ENCODE measurements at regions of chr14 and their contacts with region 1.

Region 1: DNA sequence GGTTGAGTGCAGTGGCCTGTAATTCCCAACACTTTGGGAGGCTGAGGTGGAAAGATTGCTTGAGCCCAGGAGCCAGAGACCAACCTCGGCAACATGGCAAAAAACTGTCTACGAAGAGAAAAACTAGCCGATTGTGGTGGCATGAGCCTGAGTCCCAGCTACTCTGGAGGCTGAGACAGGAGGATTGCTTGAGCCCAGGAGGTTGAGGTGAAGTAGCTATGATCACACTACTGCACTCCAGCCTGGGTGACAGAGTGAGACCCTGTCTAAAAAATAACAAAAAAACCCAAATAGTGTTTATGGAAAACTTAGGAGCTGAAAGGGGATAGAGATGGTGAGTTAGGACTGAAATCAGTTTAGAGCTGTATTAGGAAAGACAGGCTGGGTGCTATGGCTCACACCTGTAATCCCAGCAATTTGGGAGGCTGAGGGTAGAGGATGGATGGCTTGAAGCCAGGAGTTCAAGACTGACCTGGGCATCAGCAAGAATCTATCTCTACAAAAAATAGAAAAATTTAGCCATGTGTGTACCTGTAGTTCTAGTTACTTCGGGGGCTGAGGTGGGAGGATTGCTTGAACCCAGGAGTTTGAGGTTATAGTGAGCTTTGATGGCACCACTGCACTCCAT is 9.7 kb downstream of the PNN start:
- DNase-seq: no peak
- H3K4me3 ChIP-seq: no peak overlapping the region
- H3K27ac ChIP-seq: no peak overlapping the region
- H3K27me3 ChIP-seq: no peaks in the 10 kb centered on the region
- CTCF ChIP-seq: no peak

Region 2: DNA sequence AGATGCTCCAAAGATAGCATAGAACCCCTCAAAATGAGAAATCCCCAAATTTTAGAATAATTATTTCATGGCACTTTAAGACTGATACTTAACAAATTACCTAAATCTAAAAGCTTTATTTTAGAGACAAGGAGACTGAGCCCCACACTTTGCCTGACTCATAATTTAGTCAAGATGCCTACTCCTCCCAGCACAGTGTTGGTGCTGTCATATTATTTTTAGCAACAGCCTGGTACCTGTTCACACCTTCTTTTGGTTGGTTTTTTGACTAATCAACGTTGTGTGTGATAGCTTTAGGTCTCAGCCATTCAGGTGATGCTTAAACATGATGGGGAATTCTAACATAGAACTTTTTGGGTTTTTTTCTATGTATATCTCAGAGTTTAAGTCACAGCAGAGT is 201.9 kb before region 1 on chr14:
- CTCF ChIA-PET with region 1: no interaction called
- POLR2A ChIA-PET with region 1: no interaction called
- DNase-seq: no peak
- H3K4me3 ChIP-seq: no peak overlapping the region
- H3K27ac ChIP-seq: no peak overlapping the region
- H3K27me3 ChIP-seq: no peaks in the 10 kb centered on the region
- CTCF ChIP-seq: no peak

Region 3: GRCh38 chr14:39212034-39212433 is 27.3 kb after region 1 on chr14:
- CTCF ChIA-PET with region 1: no interaction called
- POLR2A ChIA-PET with region 1: no interaction called
- DNase-seq: no peak
- H3K4me3 ChIP-seq: no peak overlapping the region
- H3K27ac ChIP-seq: no peak overlapping the region
- H3K27me3 ChIP-seq: no peaks in the 10 kb centered on the region
- CTCF ChIP-seq: no peak

Region 4: GRCh38 chr14:39302124-39302810 is 117.5 kb after region 1 on chr14:
- CTCF ChIA-PET with region 1: no interaction called
- POLR2A ChIA-PET with region 1: interaction called, 12 read pairs
- DNase-seq: no peak
- H3K4me3 ChIP-seq: no peak overlapping the region
- H3K27ac ChIP-seq: no peak overlapping the region
- H3K27me3 ChIP-seq: no peaks in the 10 kb centered on the region
- CTCF ChIP-seq: no peak

Measured in AG04450 (cell line).